Prostate gland (tissue), 2 donors: ENCODE measurements at regions of chr15 and their contacts with region 1.

Region 1: DNA sequence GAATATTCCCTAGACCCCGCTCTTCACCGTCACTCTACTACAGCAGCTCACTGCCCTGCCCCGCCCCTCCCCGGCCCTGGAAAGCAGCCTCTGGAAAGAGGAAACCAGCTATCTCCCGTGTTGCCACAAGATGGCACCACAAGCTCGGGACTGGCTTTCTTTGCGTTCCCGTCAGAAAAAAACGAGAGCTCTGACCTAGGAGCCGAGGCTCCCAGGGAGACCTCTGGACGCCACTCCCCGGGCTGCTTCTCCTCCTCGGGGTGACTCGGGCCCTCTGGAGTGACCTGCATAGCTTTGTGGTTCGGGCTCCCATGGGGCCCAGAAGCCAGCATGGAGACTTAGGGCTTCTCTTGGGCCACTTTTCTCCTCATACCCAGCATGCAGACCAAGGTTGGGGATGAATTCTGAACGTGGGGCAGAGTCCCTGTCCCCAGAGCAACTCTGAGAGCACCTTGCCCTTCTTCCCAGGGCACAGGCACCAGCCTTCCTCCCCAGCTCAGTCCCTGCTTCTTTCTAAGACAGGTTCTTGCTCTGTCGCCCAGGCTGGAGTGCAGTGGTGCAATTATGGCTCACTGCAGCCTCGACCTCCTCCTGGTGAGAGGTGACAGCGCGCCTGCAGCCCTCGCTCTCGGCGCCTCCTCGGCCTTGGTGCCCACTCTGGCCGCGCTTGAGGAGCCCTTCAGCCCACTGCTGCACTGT is 19.0 kb downstream of the STOML1 start:
- DNase-seq: peak; percentile 81
- H3K4me3 ChIP-seq: no peak overlapping the region
- H3K27ac ChIP-seq: no peak overlapping the region
- H3K4me1 ChIP-seq: peaks cover 4% of the 10 kb centered on the region
- H3K27me3 ChIP-seq: no peaks in the 10 kb centered on the region
- CTCF ChIP-seq: peak; percentile 64 to 93 (median 84)
- POLR2A ChIP-seq: no peak

Region 2: DNA sequence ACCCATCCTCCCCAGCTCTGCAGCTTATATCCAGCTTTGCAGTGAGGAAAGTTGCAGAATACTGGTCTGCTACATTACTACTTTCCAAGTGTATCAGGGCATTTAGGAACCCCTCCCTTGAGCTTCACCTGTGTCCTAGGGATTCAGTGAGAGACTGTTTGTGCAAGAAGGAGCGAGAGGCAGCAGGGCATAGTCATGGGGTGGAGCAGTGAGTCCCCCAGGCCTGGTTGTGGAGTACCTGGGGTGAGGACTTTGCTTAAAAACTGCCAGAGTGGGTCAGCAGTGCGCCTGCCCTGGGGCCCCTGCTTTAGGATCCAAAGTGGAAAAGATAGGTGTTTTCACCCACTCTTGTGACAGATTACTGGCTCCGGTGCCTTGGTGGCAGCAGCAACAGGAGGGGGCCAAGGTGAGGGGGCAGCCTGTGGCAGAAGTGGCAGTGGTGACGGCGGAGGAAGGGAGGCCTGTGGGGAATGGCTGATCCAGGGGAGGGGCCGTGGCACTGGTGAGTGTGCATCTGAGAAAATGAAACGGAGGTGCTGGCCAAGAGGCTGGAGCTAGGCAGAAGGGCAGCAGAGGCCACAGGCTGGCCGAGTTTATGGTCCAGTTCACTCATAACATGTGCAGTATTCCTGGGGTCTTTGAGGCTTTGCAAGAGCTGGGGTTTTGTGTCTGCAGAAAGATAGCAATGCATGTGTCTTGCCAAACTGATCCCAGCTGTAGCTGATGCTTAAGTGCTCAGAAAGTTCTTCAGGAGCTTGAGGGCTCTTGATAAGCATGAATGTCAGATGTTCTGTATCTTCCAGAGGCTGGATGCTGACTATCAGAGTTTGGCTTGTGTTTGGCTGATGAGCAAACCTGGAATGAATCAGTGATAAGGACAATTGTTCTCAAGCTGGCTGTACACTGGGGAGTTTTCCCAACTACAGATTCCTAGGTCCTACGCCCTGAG is 65.8 kb after region 1 on chr15:
- intact Hi-C with region 1: loop called (anchors 2 kb)
- DNase-seq: no peak
- H3K4me3 ChIP-seq: no peak overlapping the region
- H3K27ac ChIP-seq: no peak overlapping the region
- H3K4me1 ChIP-seq: no peaks in the 10 kb centered on the region
- H3K27me3 ChIP-seq: no peaks in the 10 kb centered on the region
- CTCF ChIP-seq: no peak
- POLR2A ChIP-seq: no peak

Region 3: DNA sequence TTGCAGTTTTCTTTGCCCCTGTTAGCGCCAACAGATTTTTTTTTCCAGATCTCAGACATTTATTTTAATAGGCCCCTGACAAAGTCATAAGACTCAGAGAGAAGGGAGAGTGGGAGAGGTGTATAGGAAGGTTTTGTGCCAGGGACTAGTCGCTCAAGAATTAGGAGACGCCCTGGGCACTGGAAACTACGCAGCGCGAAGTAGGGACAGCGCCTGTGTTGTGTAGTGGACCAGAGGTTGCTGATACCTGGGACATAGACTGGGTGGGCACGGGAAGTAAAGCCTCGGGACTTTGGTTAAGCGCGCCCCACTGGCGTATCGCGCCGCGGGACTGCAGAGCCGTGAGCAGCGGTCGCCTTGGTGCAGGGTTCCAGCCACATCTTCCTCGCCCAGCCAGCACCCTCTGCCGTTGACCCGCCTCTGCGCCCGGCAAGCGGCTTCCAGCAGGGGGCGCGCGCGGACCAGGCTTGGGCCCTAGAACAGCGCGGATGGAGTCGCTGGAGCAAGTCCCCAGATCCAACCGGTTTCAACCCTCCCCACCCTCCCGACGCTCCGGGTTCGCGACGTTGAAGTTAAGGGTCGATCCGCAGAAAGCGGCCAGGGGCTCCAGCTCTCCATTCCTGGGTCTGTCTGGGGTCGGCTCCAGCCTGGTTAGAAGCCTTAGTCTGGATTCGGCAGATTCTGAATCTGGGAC is 154.3 kb after region 1 on chr15:
- intact Hi-C with region 1: loop called (anchors 10 kb)
- DNase-seq: peak; percentile 84
- H3K4me3 ChIP-seq: peak overlapping the region; percentile 16 to 26
- H3K27ac ChIP-seq: no peak overlapping the region
- H3K4me1 ChIP-seq: peaks cover 7% of the 10 kb centered on the region
- H3K27me3 ChIP-seq: peaks cover 40% of the 10 kb centered on the region
- CTCF ChIP-seq: peak; percentile 95 to 98 (median 96)
- POLR2A ChIP-seq: no peak

Region 4: GRCh38 chr15:74322181-74323076 is 349.3 kb after region 1 on chr15:
- intact Hi-C with region 1: loop called (anchors 10 kb)
- DNase-seq: peak; percentile 40
- H3K4me3 ChIP-seq: no peak overlapping the region
- H3K27ac ChIP-seq: no peak overlapping the region
- H3K4me1 ChIP-seq: no peaks in the 10 kb centered on the region
- H3K27me3 ChIP-seq: no peaks in the 10 kb centered on the region
- CTCF ChIP-seq: peak; percentile 31 to 85 (median 68)
- POLR2A ChIP-seq: no peak